Gastrocnemius medialis (tissue), 4 donors: ENCODE measurements at regions of chr7 and their contacts with region 1.

Region 1: GRCh38 chr7:154503962-154504550 is 451.9 kb downstream of the DPP6 start:
- DNase-seq: no peak
- ATAC-seq: peak in 1 of 2 donors; percentile 46
- H3K4me3 ChIP-seq: no peak overlapping the region
- H3K27ac ChIP-seq: no peak overlapping the region
- H3K4me1 ChIP-seq: no peaks in the 10 kb centered on the region
- H3K27me3 ChIP-seq: no peaks in the 10 kb centered on the region
- CTCF ChIP-seq: peak; percentile 49 to 65 (median 51)
- POLR2A ChIP-seq: no peak

Region 2: DNA sequence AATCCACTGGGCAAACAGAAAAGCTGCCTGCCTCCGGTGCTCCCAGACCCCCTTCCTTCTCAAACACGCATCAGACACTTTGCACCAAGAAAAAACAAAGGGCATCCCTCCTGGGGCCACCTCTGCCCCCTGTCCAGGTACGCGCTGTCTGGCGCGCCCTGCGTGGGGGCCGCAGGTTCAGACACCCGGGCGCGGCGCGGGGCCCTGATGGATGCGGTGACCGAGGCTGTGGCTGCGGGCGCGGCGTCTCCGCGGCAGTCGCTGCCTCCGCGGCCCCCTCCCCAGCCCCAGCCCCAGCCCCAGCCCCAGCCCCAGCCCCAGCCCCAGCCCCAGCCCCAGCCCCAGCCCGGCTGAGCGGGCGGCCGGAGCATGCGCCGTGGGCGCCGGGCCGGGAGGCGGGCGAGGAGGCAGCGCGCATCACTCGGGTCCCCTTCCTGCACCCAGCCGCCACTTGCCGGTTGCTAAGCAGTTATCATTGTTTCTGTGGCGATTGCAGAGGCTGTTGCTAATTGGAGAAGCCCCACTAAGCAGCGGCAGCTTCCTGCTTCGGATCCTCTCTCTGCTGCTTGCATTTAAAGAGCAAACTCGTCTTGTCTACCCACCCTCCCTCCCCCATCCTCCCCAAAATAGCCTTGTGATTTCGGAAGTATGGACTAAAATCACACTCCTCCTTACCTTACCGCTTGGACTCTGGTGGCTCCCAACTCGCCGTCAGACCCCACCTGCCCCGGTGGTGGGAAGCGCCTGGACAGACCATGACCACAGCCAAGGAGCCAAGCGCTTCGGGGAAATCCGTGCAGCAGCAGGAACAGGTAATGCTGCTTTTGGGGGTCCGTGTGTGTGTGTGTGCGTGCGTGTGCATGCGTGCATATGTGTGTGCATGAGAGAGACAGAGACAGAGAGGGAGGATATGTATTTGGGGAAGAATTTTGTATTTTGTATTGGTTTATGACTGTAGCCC is 199.0 kb before region 1 on chr7:
- in situ Hi-C with region 1: no loop called
- intact Hi-C with region 1: loop called (anchors 10 kb)
- DNase-seq: no peak
- ATAC-seq: no peak
- H3K4me3 ChIP-seq: no peak overlapping the region
- H3K27ac ChIP-seq: no peak overlapping the region
- H3K4me1 ChIP-seq: no peaks in the 10 kb centered on the region
- H3K27me3 ChIP-seq: peaks cover 5 to 7% (median 6%) of the 10 kb centered on the region in 3 donors
- CTCF ChIP-seq: no peak
- POLR2A ChIP-seq: no peak

Region 3: GRCh38 chr7:154672659-154673415 is 168.8 kb after region 1 on chr7:
- in situ Hi-C with region 1: no loop called
- intact Hi-C with region 1: no loop called
- DNase-seq: no peak
- ATAC-seq: no peak
- H3K4me3 ChIP-seq: no peak overlapping the region
- H3K27ac ChIP-seq: no peak overlapping the region
- H3K4me1 ChIP-seq: no peaks in the 10 kb centered on the region
- H3K27me3 ChIP-seq: no peaks in the 10 kb centered on the region
- CTCF ChIP-seq: no peak
- POLR2A ChIP-seq: no peak